T-cell (primary cell): ENCODE measurements at regions of chr12 and their contacts with region 1.

Region 1: DNA sequence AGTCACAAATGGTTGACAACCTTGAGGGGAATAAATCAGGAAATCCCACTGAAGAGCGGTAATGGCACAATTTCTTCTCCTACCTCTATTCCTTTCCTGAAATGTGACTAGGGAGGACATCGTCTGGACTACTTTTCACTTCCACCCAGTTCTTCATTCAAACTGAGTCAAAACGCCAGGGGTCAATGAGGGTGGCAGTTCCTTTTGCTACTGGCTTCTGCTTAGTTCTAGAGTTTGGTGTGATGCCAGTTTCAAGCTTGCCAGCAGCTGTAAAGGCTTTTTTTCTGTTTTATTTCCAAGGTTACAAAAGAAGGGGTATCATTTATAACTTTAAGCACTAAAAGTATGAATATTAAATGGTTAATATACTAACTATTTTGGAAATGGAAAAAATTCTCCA is 286.5 kb downstream of the SOX5 start:
- DNase-seq: no peak
- ATAC-seq: no peak
- H3K4me3 ChIP-seq: no peak overlapping the region
- H3K4me3 Mint-ChIP-seq: no peak overlapping the region
- H3K27ac ChIP-seq: no peak overlapping the region
- H3K27ac Mint-ChIP-seq: no peak overlapping the region
- H3K4me1 ChIP-seq: no peaks in the 10 kb centered on the region
- H3K4me1 Mint-ChIP-seq: no peaks in the 10 kb centered on the region
- H3K27me3 ChIP-seq: no peaks in the 10 kb centered on the region
- H3K27me3 Mint-ChIP-seq: no peaks in the 10 kb centered on the region

Region 2: GRCh38 chr12:22653075-22653474 is 1009.9 kb before region 1 on chr12:
- CTCF ChIA-PET with region 1: no interaction called
- POLR2A ChIA-PET with region 1: interaction called in 1 of 2 experiments, 13 read pairs
- DNase-seq: no peak
- ATAC-seq: no peak
- H3K4me3 ChIP-seq: no peak overlapping the region
- H3K4me3 Mint-ChIP-seq: no peak overlapping the region
- H3K27ac ChIP-seq: no peak overlapping the region
- H3K27ac Mint-ChIP-seq: no peak overlapping the region
- H3K4me1 ChIP-seq: no peaks in the 10 kb centered on the region
- H3K4me1 Mint-ChIP-seq: peaks cover 54% of the 10 kb centered on the region in 3 donors
- H3K27me3 ChIP-seq: no peaks in the 10 kb centered on the region
- H3K27me3 Mint-ChIP-seq: no peaks in the 10 kb centered on the region

Region 3: DNA sequence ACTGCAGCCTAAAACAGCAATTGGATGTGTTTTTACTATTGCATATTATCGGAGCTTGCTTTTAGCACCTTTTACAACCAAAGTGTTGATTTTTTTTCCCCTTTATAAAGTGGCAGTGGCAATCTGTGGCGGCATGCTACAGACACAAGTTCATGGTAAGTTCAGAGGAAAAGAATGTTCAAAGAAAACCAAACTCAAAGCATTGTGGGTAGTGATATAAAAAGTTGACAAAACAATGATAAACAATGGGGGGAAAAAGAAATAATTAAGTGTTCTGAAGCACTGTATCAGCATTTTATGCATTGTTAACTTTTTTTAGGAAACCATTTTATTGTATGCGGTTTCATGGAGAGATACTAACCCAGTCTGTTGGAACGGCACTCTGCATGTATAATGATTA is 778.5 kb after region 1 on chr12:
- CTCF ChIA-PET with region 1: no interaction called
- POLR2A ChIA-PET with region 1: no interaction called
- DNase-seq: no peak
- ATAC-seq: no peak
- H3K4me3 ChIP-seq: no peak overlapping the region
- H3K4me3 Mint-ChIP-seq: no peak overlapping the region
- H3K27ac ChIP-seq: no peak overlapping the region
- H3K27ac Mint-ChIP-seq: no peak overlapping the region
- H3K4me1 ChIP-seq: no peaks in the 10 kb centered on the region
- H3K4me1 Mint-ChIP-seq: no peaks in the 10 kb centered on the region
- H3K27me3 ChIP-seq: no peaks in the 10 kb centered on the region
- H3K27me3 Mint-ChIP-seq: peaks cover 0 to 2% of the 10 kb centered on the region in 2 donors